ENCODE measurements at regions of chr2 and their contacts with region 1.

Region 1: GRCh38 chr2:206800506-206801417 is 35.4 kb downstream of the FASTKD2 start:
- DNase-seq: peak in 32 of 35 experiments; percentile 2 to 69 (median 28)
- ATAC-seq: peak in 3 of 4 experiments; percentile 50 to 65 (median 53)
- H3K4me3 ChIP-seq: peak overlapping the region in 1 of 2 donors; percentile 13
- H3K4me3 Mint-ChIP-seq: peak overlapping the region; percentile 47 to 64 (median 56)
- H3K27ac ChIP-seq: no peak overlapping the region
- H3K27ac Mint-ChIP-seq: peak overlapping the region in 1 of 2 donors; percentile 61
- H3K4me1 ChIP-seq: peaks cover 0 to 7% of the 10 kb centered on the region in 2 experiments
- H3K4me1 Mint-ChIP-seq: peaks cover 16 to 18% (median 17%) of the 10 kb centered on the region in 3 donors
- H3K27me3 ChIP-seq: no peaks in the 10 kb centered on the region
- H3K27me3 Mint-ChIP-seq: no peaks in the 10 kb centered on the region

Region 2: GRCh38 chr2:206241736-206242135 is 559.0 kb before region 1 on chr2:
- CTCF ChIA-PET with region 1: no interaction called
- POLR2A ChIA-PET with region 1: no interaction called
- DNase-seq: no peak
- ATAC-seq: no peak
- H3K4me3 ChIP-seq: no peak overlapping the region
- H3K4me3 Mint-ChIP-seq: no peak overlapping the region
- H3K27ac ChIP-seq: no peak overlapping the region
- H3K27ac Mint-ChIP-seq: no peak overlapping the region
- H3K4me1 ChIP-seq: no peaks in the 10 kb centered on the region
- H3K4me1 Mint-ChIP-seq: peaks cover 0 to 2% (median 0%) of the 10 kb centered on the region in 3 donors
- H3K27me3 ChIP-seq: peaks cover 0 to 8% of the 10 kb centered on the region in 2 experiments
- H3K27me3 Mint-ChIP-seq: peaks cover 7 to 16% of the 10 kb centered on the region in 2 donors

Region 3: DNA sequence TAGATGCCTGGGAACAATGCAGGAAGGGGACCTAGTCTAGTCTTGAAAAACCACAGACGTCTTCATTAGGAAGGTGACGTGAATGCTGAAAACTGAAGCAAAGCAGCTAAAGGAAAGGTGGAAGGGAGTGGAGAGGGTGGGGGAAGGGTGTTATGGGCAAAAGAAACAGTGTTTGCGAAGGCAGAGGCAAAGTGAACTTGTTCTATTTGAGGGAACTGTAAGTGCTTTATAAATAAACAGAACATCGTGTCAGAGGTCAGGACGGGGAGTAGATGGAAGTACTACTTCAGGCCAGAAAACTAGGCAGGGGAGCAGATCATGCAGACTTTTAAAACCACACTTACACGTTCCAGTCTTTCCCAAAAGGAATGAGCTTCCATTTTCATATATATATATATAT is 22.4 kb after region 1 on chr2:
- CTCF ChIA-PET with region 1: no interaction called
- POLR2A ChIA-PET with region 1: no interaction called
- DNase-seq: no peak
- ATAC-seq: no peak
- H3K4me3 ChIP-seq: no peak overlapping the region
- H3K4me3 Mint-ChIP-seq: no peak overlapping the region
- H3K27ac ChIP-seq: no peak overlapping the region
- H3K27ac Mint-ChIP-seq: no peak overlapping the region
- H3K4me1 ChIP-seq: no peaks in the 10 kb centered on the region
- H3K4me1 Mint-ChIP-seq: no peaks in the 10 kb centered on the region
- H3K27me3 ChIP-seq: no peaks in the 10 kb centered on the region
- H3K27me3 Mint-ChIP-seq: no peaks in the 10 kb centered on the region

Region 4: GRCh38 chr2:208175069-208175839 is 1374.5 kb after region 1 on chr2:
- CTCF ChIA-PET with region 1: interaction called in 1 of 2 experiments, 10 read pairs
- POLR2A ChIA-PET with region 1: no interaction called
- DNase-seq: peak; percentile 3 to 75 (median 34)
- ATAC-seq: peak; percentile 89 to 94 (median 90)
- H3K4me3 ChIP-seq: no peak overlapping the region
- H3K4me3 Mint-ChIP-seq: no peak overlapping the region
- H3K27ac ChIP-seq: no peak overlapping the region
- H3K27ac Mint-ChIP-seq: no peak overlapping the region
- H3K4me1 ChIP-seq: peaks cover 0 to 2% of the 10 kb centered on the region in 2 experiments
- H3K4me1 Mint-ChIP-seq: peaks cover 0 to 3% (median 3%) of the 10 kb centered on the region in 3 donors
- H3K27me3 ChIP-seq: peaks cover 0 to 8% of the 10 kb centered on the region in 2 experiments
- H3K27me3 Mint-ChIP-seq: peaks cover 8 to 24% of the 10 kb centered on the region in 2 donors

Measured in T-cell (primary cell).